Aorta (tissue), 5 donors: ENCODE measurements at regions of chr6 and their contacts with region 1.

Region 1: GRCh38 chr6:35139908-35140655 is 1.1 kb downstream of the TCP11 start:
- DNase-seq: peak in 1 of 2 donors; percentile 58
- ATAC-seq: peak; percentile 68
- H3K4me3 ChIP-seq: no peak overlapping the region
- H3K27ac ChIP-seq: no peak overlapping the region
- H3K4me1 ChIP-seq: no peaks in the 10 kb centered on the region
- H3K27me3 ChIP-seq: no peaks in the 10 kb centered on the region

Region 2: GRCh38 chr6:34986845-34987246 is 153.2 kb before region 1 on chr6:
- intact Hi-C with region 1: loop called (anchors 1 to 2 kb)
- DNase-seq: peak; percentile 64 to 85
- ATAC-seq: peak; percentile 89
- H3K4me3 ChIP-seq: no peak overlapping the region
- H3K27ac ChIP-seq: peak overlapping the region in 1 of 2 donors; percentile 38
- H3K4me1 ChIP-seq: no peaks in the 10 kb centered on the region
- H3K27me3 ChIP-seq: no peaks in the 10 kb centered on the region

Region 3: DNA sequence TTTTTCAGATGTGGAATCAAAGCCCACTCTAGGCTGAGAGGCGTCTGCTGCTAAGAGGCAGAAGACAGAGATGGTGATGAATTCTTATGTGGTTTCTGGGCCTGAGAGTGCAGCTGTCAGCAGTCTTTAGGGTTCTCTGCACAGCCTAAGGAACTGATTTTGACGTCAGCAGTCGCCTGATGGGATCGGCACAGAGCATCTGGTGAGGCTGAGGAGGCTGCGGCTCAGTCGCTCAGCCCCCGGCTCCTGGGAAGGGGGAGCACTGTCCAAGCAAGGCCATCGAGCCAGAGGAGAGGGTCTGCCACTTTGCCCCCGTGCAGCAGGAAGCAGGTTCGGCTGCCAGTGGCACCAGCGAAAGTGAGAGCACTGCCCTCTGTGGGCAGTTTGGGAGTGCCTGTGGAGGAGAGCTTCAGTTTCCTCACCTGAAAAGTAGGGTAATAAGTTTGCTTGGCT is 91.4 kb before region 1 on chr6:
- intact Hi-C with region 1: loop called in 1 of 2 experiments (anchors 10 kb)
- DNase-seq: peak in 1 of 2 donors; percentile 86
- ATAC-seq: peak; percentile 34
- H3K4me3 ChIP-seq: no peak overlapping the region
- H3K27ac ChIP-seq: peak overlapping the region in 1 of 2 donors; percentile 22
- H3K4me1 ChIP-seq: peaks cover 2 to 8% of the 10 kb centered on the region in 2 donors
- H3K27me3 ChIP-seq: no peaks in the 10 kb centered on the region

Region 4: GRCh38 chr6:35096129-35096862 is 43.8 kb before region 1 on chr6:
- intact Hi-C with region 1: loop called in 1 of 2 experiments (anchors 5 kb)
- DNase-seq: no peak
- ATAC-seq: no peak
- H3K4me3 ChIP-seq: no peak overlapping the region
- H3K27ac ChIP-seq: peak overlapping the region in 1 of 2 donors; percentile 20
- H3K4me1 ChIP-seq: peaks cover 0 to 6% of the 10 kb centered on the region in 2 donors
- H3K27me3 ChIP-seq: no peaks in the 10 kb centered on the region

Region 5: DNA sequence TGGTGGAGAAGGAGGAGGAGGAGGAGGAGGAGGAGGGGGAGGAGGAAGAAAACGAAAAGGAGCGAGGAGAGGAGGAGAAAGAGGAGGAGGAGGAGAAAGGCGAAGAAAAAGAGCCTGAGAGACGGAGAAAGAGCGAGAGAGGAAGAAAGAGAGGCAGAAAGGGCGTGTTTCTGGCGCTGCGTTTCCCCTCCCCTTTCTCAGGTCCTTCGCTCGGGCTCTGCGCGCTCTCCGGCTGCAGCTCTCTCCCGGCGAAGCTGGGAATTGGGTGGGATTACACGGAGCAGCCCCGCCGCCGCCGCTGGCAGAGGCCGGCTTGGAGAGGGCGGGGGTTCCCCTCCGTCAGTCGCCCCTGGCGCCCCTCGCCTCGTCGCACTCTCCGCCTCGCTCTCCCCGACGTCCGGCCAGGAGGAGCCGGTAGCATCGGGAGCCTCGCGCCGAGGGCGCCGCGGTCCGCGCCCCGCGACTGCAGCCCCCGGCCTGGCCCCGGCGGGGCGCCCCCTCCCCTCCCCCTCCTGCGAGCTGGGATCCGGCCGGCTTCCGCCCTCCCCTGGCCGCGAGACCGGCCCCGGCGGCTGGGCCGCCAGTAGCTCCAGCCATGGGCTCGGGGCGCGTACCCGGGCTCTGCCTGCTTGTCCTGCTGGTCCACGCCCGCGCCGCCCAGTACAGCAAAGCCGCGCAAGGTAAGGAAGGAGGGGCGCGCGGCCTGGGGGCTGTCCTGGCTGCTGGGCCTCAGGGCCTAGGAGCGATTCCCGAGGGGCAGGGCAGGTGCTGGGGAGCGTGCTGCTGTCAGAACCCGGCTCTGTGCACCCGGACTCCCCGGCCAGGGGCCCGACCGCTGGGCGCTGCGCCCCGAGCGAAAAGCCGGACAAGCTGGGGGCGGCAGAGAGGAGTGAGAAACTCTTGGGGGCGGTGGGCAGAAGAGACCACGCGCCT is 74.0 kb after region 1 on chr6 and contains the start of gene SCUBE3:
- intact Hi-C with region 1: no loop called
- DNase-seq: peak; percentile 59 to 84
- ATAC-seq: peak; percentile 53
- H3K4me3 ChIP-seq: peak within 1 kb of the TSS; percentile 90 to 96
- H3K27ac ChIP-seq: peak within 1 kb of the TSS; percentile 69 to 83
- H3K4me1 ChIP-seq: peaks cover 4 to 9% of the 10 kb centered on the region in 2 donors
- H3K27me3 ChIP-seq: no peaks in the 10 kb centered on the region
- total RNA-seq, gene SCUBE3: 57.6 to 63.6 TPM